ENCODE measurements at regions of chr16 and their contacts with region 1.

Region 1: GRCh38 chr16:67608364-67608763 is 36.6 kb upstream of the CARMIL2 start:
- DNase-seq: no peak
- H3K4me3 ChIP-seq: no peak overlapping the region
- H3K27ac ChIP-seq: no peak overlapping the region
- H3K4me1 ChIP-seq: no peaks in the 10 kb centered on the region
- H3K27me3 ChIP-seq: no peaks in the 10 kb centered on the region
- CTCF ChIP-seq: no peak

Region 2: GRCh38 chr16:67555795-67556212 is 52.6 kb before region 1 on chr16:
- CTCF ChIA-PET with region 1: no interaction called
- dilution Hi-C with region 1: loop called (anchors 5 kb)
- in situ Hi-C with region 1: no loop called
- intact Hi-C with region 1: no loop called
- DNase-seq: peak; percentile 85
- H3K4me3 ChIP-seq: no peak overlapping the region
- H3K27ac ChIP-seq: peak overlapping the region; percentile 58
- H3K4me1 ChIP-seq: peaks cover 22% of the 10 kb centered on the region
- H3K27me3 ChIP-seq: no peaks in the 10 kb centered on the region
- CTCF ChIP-seq: no peak

Region 3: GRCh38 chr16:67685388-67686112 is 77.2 kb after region 1 on chr16:
- CTCF ChIA-PET with region 1: no interaction called
- dilution Hi-C with region 1: no loop called
- in situ Hi-C with region 1: no loop called
- intact Hi-C with region 1: no loop called
- DNase-seq: no peak
- H3K4me3 ChIP-seq: no peak overlapping the region
- H3K27ac ChIP-seq: no peak overlapping the region
- H3K4me1 ChIP-seq: no peaks in the 10 kb centered on the region
- H3K27me3 ChIP-seq: no peaks in the 10 kb centered on the region
- CTCF ChIP-seq: no peak